MCF 10A (cell line): ENCODE measurements at regions of chr2 and their contacts with region 1.

Region 1: GRCh38 chr2:190534310-190535120 is at the start of gene NEMP2:
- DNase-seq: peak; percentile 77
- H3K4me3 Mint-ChIP-seq: peak within 1 kb of the TSS; percentile 80
- H3K27ac Mint-ChIP-seq: peak within 1 kb of the TSS; percentile 98
- H3K4me1 Mint-ChIP-seq: peaks cover 37% of the 10 kb centered on the region
- H3K27me3 Mint-ChIP-seq: no peaks in the 10 kb centered on the region
- CTCF ChIP-seq: no peak
- total RNA-seq, gene NEMP2: 34.2 and 46.0 TPM in 2 replicates

Region 2: GRCh38 chr2:190545555-190546385 is 11.3 kb after region 1 on chr2:
- CTCF ChIA-PET with region 1: no interaction called
- POLR2A ChIA-PET with region 1: interaction called, 25 read pairs
- intact Hi-C with region 1: no loop called
- DNase-seq: no peak
- H3K4me3 Mint-ChIP-seq: peak overlapping the region; percentile 63
- H3K27ac Mint-ChIP-seq: peak overlapping the region; percentile 94
- H3K4me1 Mint-ChIP-seq: peaks cover 32% of the 10 kb centered on the region
- H3K27me3 Mint-ChIP-seq: no peaks in the 10 kb centered on the region
- CTCF ChIP-seq: no peak

Region 3: GRCh38 chr2:190571686-190572085 is 37.2 kb after region 1 on chr2:
- CTCF ChIA-PET with region 1: no interaction called
- POLR2A ChIA-PET with region 1: interaction called, 33 read pairs
- intact Hi-C with region 1: no loop called
- DNase-seq: peak; percentile 43
- H3K4me3 Mint-ChIP-seq: no peak overlapping the region
- H3K27ac Mint-ChIP-seq: peak overlapping the region; percentile 77
- H3K4me1 Mint-ChIP-seq: peaks cover 41% of the 10 kb centered on the region
- H3K27me3 Mint-ChIP-seq: no peaks in the 10 kb centered on the region
- CTCF ChIP-seq: no peak

Region 4: GRCh38 chr2:190607014-190607597 is 72.6 kb after region 1 on chr2:
- CTCF ChIA-PET with region 1: no interaction called
- POLR2A ChIA-PET with region 1: interaction called, 21 read pairs
- intact Hi-C with region 1: loop called (anchors 2 kb)
- DNase-seq: peak; percentile 89
- H3K4me3 Mint-ChIP-seq: peak overlapping the region; percentile 56
- H3K27ac Mint-ChIP-seq: peak overlapping the region; percentile 81
- H3K4me1 Mint-ChIP-seq: peaks cover 63% of the 10 kb centered on the region
- H3K27me3 Mint-ChIP-seq: no peaks in the 10 kb centered on the region
- CTCF ChIP-seq: no peak

Region 5: DNA sequence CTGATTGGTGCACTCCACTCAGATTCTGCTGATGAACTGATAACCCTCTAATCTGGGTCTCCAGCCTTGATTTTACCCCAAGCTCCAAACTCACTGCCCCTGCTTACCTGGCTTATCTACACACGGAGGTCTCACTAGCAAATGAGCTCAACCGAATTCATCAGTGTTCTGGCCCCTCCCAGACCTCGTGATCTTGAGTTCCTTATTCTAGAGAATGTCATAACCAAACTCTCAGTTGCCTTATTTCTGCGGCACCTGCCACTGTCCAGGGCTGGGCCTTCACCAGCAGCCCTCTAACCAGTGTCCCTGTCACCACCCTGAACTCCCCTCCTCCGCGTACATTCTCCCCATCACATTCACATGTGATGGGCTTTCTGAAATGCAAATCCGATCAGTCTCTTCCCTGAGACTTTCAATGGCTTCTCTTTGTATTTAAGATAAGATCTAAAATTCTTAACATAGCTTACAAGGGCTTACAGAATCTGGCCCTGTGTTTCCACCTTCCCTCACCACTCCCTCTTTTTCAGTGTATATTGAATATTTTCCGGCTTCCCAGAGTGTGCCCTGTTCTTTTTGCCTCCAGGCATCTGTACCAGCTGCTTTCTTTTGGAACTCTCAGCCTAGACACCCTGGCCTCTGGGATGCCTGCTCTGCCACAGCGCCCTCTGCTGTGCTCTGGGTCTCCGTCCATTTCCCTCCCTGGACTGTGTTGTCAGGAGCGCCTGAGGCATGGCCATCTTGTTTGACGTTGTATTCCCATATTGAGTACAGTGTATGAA is 145.5 kb after region 1 on chr2:
- CTCF ChIA-PET with region 1: interaction called, 9 read pairs
- POLR2A ChIA-PET with region 1: interaction called, 3 read pairs
- intact Hi-C with region 1: loop called (anchors 1 kb)
- DNase-seq: peak; percentile 95
- H3K4me3 Mint-ChIP-seq: peak overlapping the region; percentile 12
- H3K27ac Mint-ChIP-seq: peak overlapping the region; percentile 50
- H3K4me1 Mint-ChIP-seq: peaks cover 18% of the 10 kb centered on the region
- H3K27me3 Mint-ChIP-seq: no peaks in the 10 kb centered on the region
- CTCF ChIP-seq: peak; percentile 86

Region 6: DNA sequence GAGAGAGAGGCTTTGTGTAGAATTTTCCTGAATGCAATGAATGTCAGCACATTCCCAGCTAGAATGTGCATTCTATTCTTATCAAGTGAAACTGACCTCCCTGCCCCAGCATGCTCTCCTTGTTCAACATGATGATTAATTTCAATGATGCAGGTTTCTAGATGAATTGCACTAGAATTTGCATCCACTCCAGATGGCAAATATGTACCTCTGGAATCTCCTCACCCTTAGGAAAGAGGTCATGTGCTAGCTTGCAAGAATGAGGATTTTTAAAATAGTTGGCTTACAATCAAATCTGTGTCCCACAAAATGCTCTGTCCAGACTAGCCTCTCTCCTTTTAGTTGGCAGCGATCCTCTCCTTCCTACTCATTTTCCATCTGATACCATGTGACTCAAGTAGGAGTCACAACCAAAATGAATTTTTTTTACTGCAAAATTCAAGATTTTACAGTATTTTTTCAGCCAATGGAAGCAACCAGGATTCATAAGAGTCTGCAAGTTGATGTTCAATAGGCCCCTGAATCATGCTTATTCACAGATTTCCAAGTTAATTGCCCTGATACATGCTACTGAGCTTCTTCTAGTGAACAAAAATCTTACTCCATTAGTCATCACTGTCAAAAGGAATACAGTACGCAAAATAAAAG is 637.3 kb after region 1 on chr2:
- CTCF ChIA-PET with region 1: no interaction called
- POLR2A ChIA-PET with region 1: no interaction called
- intact Hi-C with region 1: no loop called
- DNase-seq: peak; percentile 98
- H3K4me3 Mint-ChIP-seq: peak overlapping the region; percentile 33
- H3K27ac Mint-ChIP-seq: peak overlapping the region; percentile 79
- H3K4me1 Mint-ChIP-seq: peaks cover 61% of the 10 kb centered on the region
- H3K27me3 Mint-ChIP-seq: no peaks in the 10 kb centered on the region
- CTCF ChIP-seq: no peak